CD14-positive monocyte (primary cell): ENCODE measurements at regions of chr10 and their contacts with region 1.

Region 1: DNA sequence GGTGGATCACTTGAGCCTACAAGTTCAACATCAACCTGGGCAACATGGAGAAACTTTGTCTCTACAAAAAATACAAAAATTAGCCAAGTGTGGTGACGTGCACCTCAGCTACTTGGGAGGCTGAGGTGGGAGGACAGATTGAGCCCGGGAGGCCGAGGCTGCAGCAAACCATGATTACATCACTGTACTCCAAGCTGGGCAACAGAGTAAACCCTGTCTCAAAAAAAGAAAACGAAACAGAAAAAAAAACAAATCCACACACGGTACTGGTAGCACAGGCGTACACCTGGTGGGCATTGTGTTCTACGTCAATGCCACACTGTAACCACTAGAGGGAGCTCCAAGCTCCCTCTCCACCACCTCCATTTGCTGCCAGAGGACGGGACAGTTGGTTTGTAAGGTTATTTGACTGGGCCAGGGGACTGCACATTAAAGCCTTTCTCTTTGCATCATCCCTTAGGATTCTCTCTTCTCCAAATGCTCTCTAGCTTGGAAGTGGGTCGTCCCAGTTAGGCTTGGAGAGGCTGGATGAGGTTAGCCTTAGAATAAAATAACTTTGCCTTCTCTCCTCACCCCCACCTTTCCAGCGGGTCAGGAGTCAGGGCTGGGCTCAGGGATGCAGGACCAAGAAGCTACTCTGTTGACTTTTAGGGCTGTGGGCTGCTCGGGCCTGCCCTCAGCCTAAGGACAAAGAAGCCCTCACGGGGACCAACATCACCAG is 130.8 kb downstream of the SORBS1 start:
- DNase-seq: peak; percentile 37 to 46 (median 43)
- H3K4me3 ChIP-seq: no peak overlapping the region
- H3K4me3 Mint-ChIP-seq: no peak overlapping the region
- H3K27ac ChIP-seq: no peak overlapping the region
- H3K27ac Mint-ChIP-seq: no peak overlapping the region
- H3K4me1 ChIP-seq: no peaks in the 10 kb centered on the region
- H3K4me1 Mint-ChIP-seq: no peaks in the 10 kb centered on the region
- H3K27me3 ChIP-seq: no peaks in the 10 kb centered on the region
- H3K27me3 Mint-ChIP-seq: peaks cover 2 to 4% (median 3%) of the 10 kb centered on the region in 3 donors
- CTCF ChIP-seq: peak; percentile 98

Region 2: GRCh38 chr10:95601116-95601719 is 170.8 kb after region 1 on chr10:
- intact Hi-C with region 1: loop called (anchors 1 to 5 kb)
- DNase-seq: peak; percentile 32 to 53 (median 44)
- H3K4me3 ChIP-seq: no peak overlapping the region
- H3K4me3 Mint-ChIP-seq: no peak overlapping the region
- H3K27ac ChIP-seq: no peak overlapping the region
- H3K27ac Mint-ChIP-seq: no peak overlapping the region
- H3K4me1 ChIP-seq: no peaks in the 10 kb centered on the region
- H3K4me1 Mint-ChIP-seq: no peaks in the 10 kb centered on the region
- H3K27me3 ChIP-seq: no peaks in the 10 kb centered on the region
- H3K27me3 Mint-ChIP-seq: peaks cover 2 to 5% (median 5%) of the 10 kb centered on the region in 3 donors
- CTCF ChIP-seq: peak; percentile 83